Aorta (tissue), 5 donors: ENCODE measurements at regions of chr15 and their contacts with region 1.

Region 1: DNA sequence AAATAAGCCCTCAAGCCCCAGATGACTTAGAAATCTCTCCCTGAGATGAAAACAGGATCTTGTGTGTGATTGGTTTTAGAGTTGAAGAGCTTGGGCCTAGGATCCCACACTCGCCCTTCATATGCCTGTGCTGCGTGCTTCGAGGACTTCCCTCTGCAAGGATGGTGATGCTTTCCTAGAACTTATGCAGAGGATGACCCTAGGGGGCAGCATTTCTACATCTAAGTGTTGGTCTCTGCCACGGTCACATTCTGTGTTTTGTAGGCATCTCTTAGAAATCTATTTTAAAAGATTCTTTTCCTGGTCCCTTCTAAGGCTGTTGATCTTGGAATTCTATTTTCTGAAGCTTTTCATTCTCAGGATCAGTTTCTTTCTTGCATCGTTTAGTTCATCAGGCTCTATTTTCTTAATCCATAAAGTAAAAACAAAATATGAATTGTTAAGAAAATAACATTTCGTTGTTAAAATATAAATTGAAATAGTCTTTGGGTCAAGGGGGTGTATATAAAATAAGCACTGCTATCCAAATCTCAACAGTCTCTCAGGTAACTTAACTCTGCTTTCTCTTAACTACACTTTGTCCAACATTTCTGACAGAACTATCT is 45.7 kb downstream of the WDR76 start:
- DNase-seq: no peak
- ATAC-seq: peak; percentile 71
- H3K4me3 ChIP-seq: no peak overlapping the region
- H3K27ac ChIP-seq: no peak overlapping the region
- H3K4me1 ChIP-seq: no peaks in the 10 kb centered on the region
- H3K27me3 ChIP-seq: no peaks in the 10 kb centered on the region

Region 2: DNA sequence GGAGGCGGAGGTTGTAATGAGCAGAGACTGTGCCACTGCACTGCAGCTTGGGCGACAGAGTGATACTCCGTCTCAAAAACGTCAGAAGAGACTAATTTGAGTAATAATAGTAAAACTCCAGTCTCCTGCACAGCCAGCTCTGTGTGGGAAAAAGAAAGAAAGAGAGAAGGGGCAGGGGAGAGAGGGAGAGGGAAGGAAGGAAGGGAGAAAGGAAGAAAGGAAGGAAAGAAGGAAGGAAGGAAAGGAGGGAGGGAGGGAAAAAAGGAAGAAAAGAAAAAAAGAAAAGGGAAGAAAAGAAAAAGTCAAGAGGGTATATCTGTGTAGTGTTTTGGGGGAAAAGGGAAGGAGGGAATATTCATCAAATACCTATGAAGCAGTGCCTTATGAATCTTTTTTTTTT is 149.4 kb before region 1 on chr15:
- intact Hi-C with region 1: no loop called
- DNase-seq: no peak
- ATAC-seq: no peak
- H3K4me3 ChIP-seq: no peak overlapping the region
- H3K27ac ChIP-seq: no peak overlapping the region
- H3K4me1 ChIP-seq: no peaks in the 10 kb centered on the region
- H3K27me3 ChIP-seq: no peaks in the 10 kb centered on the region

Region 3: GRCh38 chr15:44215594-44215993 is 343.1 kb after region 1 on chr15:
- intact Hi-C with region 1: loop called (anchors 2 to 5 kb)
- DNase-seq: no peak
- ATAC-seq: no peak
- H3K4me3 ChIP-seq: no peak overlapping the region
- H3K27ac ChIP-seq: no peak overlapping the region
- H3K4me1 ChIP-seq: no peaks in the 10 kb centered on the region
- H3K27me3 ChIP-seq: no peaks in the 10 kb centered on the region

Region 4: GRCh38 chr15:44222478-44222877 is 350.0 kb after region 1 on chr15:
- intact Hi-C with region 1: loop called (anchors 2 to 5 kb)
- DNase-seq: no peak
- ATAC-seq: no peak
- H3K4me3 ChIP-seq: no peak overlapping the region
- H3K27ac ChIP-seq: no peak overlapping the region
- H3K4me1 ChIP-seq: no peaks in the 10 kb centered on the region
- H3K27me3 ChIP-seq: no peaks in the 10 kb centered on the region